ENCODE measurements at regions of chr3 and their contacts with region 1.

Region 1: DNA sequence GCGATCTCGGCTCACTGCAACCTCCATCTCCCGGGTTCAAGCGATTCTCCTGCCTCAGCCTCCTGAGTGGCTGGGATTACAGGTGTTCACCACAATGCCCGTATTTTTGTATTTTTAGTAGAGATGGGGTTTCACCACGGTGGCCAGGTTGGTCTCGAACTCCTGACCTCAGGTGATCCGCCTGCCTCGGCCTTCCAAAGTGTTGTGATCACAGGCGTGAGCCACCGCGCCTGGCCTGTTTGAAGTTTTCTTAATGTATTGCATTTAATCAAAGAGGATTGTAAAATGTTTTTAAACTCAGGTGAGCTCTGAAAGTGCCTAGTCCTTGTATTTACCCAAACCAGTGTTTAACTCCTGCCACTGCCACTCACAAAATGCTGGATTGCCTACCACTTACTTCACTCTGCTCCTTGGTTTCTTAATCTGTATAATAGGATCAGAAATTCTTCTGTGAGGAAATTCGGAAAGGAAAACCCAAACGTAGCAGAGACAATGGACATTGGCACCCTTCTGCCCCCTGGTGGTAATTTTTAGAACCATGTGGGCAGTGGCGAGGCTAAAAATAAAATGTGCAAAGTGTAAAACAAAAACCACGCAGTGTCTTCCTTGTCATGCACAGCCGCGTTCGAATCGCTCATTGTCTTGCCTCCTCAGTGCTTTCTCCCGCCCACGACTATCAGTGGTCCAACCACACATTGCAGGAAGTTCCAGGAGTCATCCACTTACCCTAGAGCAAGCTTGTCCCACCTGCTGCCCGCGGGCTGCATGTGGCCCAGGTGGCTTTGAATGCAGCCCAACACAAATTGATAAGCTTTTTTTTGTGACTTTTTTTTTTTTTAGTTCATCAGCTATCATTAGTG is 27.3 kb downstream of the CEP19 start:
- DNase-seq: peak; percentile 87
- ATAC-seq: peak; percentile 92
- H3K4me3 ChIP-seq: peak overlapping the region in 2 of 5 experiments; percentile 34 to 37
- H3K4me3 Mint-ChIP-seq: peak overlapping the region; percentile 57
- H3K27ac ChIP-seq: peak overlapping the region in 1 of 2 donors; percentile 34
- H3K27ac Mint-ChIP-seq: peak overlapping the region; percentile 28
- H3K4me1 ChIP-seq: peaks cover 21 to 26% of the 10 kb centered on the region in 2 donors
- H3K4me1 Mint-ChIP-seq: peaks cover 25% of the 10 kb centered on the region
- H3K27me3 ChIP-seq: no peaks in the 10 kb centered on the region
- H3K27me3 Mint-ChIP-seq: no peaks in the 10 kb centered on the region
- CTCF ChIP-seq: peak; percentile 87

Region 2: DNA sequence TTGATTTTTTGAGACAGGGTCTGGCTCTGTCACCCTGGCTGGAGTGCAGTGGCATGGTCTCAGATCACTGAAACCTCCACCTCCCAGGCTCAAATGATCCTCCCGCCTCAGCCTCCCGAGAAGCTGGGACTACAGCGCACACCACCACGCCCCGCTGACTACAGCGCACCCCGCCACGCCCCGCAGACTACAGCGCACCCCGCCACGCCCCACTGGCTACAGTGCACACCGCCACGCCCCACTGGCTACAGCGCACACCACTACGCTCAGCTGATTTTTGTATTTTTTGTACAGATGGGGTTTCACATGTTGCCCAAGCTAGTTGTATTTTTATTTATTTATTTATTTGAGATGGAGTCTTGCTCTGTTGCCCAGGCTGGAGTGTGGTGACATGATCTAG is 432.9 kb before region 1 on chr3:
- CTCF ChIA-PET with region 1: no interaction called
- POLR2A ChIA-PET with region 1: no interaction called
- intact Hi-C with region 1: loop called (anchors 10 kb)
- DNase-seq: peak; percentile 46
- ATAC-seq: peak; percentile 57
- H3K4me3 ChIP-seq: no peak overlapping the region
- H3K4me3 Mint-ChIP-seq: no peak overlapping the region
- H3K27ac ChIP-seq: no peak overlapping the region
- H3K27ac Mint-ChIP-seq: no peak overlapping the region
- H3K4me1 ChIP-seq: no peaks in the 10 kb centered on the region
- H3K4me1 Mint-ChIP-seq: peaks cover 8% of the 10 kb centered on the region
- H3K27me3 ChIP-seq: no peaks in the 10 kb centered on the region
- H3K27me3 Mint-ChIP-seq: no peaks in the 10 kb centered on the region
- CTCF ChIP-seq: no peak

Region 3: GRCh38 chr3:196596355-196596754 is 88.4 kb before region 1 on chr3:
- CTCF ChIA-PET with region 1: no interaction called
- POLR2A ChIA-PET with region 1: no interaction called
- intact Hi-C with region 1: no loop called
- DNase-seq: no peak
- ATAC-seq: no peak
- H3K4me3 ChIP-seq: no peak overlapping the region
- H3K4me3 Mint-ChIP-seq: no peak overlapping the region
- H3K27ac ChIP-seq: no peak overlapping the region
- H3K27ac Mint-ChIP-seq: no peak overlapping the region
- H3K4me1 ChIP-seq: peaks cover 0 to 3% of the 10 kb centered on the region in 2 donors
- H3K4me1 Mint-ChIP-seq: peaks cover 9% of the 10 kb centered on the region
- H3K27me3 ChIP-seq: peaks cover 0 to 4% (median 2%) of the 10 kb centered on the region in 4 experiments
- H3K27me3 Mint-ChIP-seq: peaks cover 16% of the 10 kb centered on the region
- CTCF ChIP-seq: no peak

Region 4: GRCh38 chr3:196617256-196617655 is 67.5 kb before region 1 on chr3:
- CTCF ChIA-PET with region 1: interaction called, 259 read pairs
- POLR2A ChIA-PET with region 1: no interaction called
- intact Hi-C with region 1: no loop called
- DNase-seq: no peak
- ATAC-seq: no peak
- H3K4me3 ChIP-seq: no peak overlapping the region
- H3K4me3 Mint-ChIP-seq: no peak overlapping the region
- H3K27ac ChIP-seq: no peak overlapping the region
- H3K27ac Mint-ChIP-seq: no peak overlapping the region
- H3K4me1 ChIP-seq: peaks cover 0 to 4% of the 10 kb centered on the region in 2 donors
- H3K4me1 Mint-ChIP-seq: peaks cover 2% of the 10 kb centered on the region
- H3K27me3 ChIP-seq: no peaks in the 10 kb centered on the region
- H3K27me3 Mint-ChIP-seq: no peaks in the 10 kb centered on the region
- CTCF ChIP-seq: no peak

Region 5: GRCh38 chr3:196632046-196632751 is 52.6 kb before region 1 on chr3:
- CTCF ChIA-PET with region 1: interaction called, 16 read pairs
- POLR2A ChIA-PET with region 1: interaction called, 3 read pairs
- intact Hi-C with region 1: loop called (anchors 2 kb)
- DNase-seq: peak; percentile 90
- ATAC-seq: peak; percentile 82
- H3K4me3 ChIP-seq: peak overlapping the region; percentile 60 to 78 (median 70)
- H3K4me3 Mint-ChIP-seq: peak overlapping the region; percentile 92
- H3K27ac ChIP-seq: peak overlapping the region; percentile 94 to 97
- H3K27ac Mint-ChIP-seq: peak overlapping the region; percentile 96
- H3K4me1 ChIP-seq: peaks cover 29 to 49% of the 10 kb centered on the region in 2 donors
- H3K4me1 Mint-ChIP-seq: peaks cover 52% of the 10 kb centered on the region
- H3K27me3 ChIP-seq: no peaks in the 10 kb centered on the region
- H3K27me3 Mint-ChIP-seq: no peaks in the 10 kb centered on the region
- CTCF ChIP-seq: peak; percentile 29

Region 6: GRCh38 chr3:196670339-196670738 is 14.4 kb before region 1 on chr3:
- CTCF ChIA-PET with region 1: interaction called, 13 read pairs
- POLR2A ChIA-PET with region 1: interaction called, 5 read pairs
- intact Hi-C with region 1: no loop called
- DNase-seq: peak; percentile 36
- ATAC-seq: peak; percentile 78
- H3K4me3 ChIP-seq: peak overlapping the region; percentile 8 to 46 (median 23)
- H3K4me3 Mint-ChIP-seq: peak overlapping the region; percentile 78
- H3K27ac ChIP-seq: peak overlapping the region; percentile 31 to 71
- H3K27ac Mint-ChIP-seq: peak overlapping the region; percentile 78
- H3K4me1 ChIP-seq: peaks cover 26 to 32% of the 10 kb centered on the region in 2 donors
- H3K4me1 Mint-ChIP-seq: peaks cover 50% of the 10 kb centered on the region
- H3K27me3 ChIP-seq: no peaks in the 10 kb centered on the region
- H3K27me3 Mint-ChIP-seq: no peaks in the 10 kb centered on the region
- CTCF ChIP-seq: no peak

Region 7: DNA sequence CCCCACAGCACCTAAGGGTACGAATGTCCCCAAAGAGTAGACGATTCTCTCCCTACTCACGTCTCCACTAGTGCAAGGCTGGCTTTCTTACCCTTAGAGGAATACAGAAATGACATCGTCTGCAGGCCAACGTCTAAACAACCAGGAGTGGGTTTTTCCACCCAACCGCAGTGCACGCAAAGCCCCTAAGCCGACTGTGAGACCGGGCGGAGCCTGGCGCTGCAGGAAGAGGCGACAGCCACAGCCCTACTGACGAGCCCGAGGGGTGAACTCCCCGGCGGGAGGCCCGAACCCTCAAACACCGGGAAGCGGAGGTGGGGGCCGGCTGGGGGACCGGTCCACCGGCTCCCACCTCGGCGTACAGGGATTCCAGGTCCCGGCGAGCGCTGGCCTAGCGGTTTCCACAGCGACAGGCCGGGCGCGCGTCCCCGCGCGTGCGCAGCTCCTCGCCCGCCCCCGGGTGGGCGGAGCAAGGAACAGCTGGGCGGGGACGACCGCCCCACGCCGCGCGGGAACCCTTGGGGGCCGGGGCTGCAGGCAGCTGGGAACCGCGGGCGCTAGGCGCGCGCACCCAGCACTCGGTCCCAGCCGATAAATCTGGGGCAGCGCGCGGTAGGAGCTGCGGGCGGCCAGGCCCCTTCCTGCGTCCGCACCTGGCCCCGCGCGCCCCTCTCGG is 27.2 kb after region 1 on chr3 and contains the starts of genes CEP19 and PIGX:
- CTCF ChIA-PET with region 1: interaction called, 3 read pairs
- POLR2A ChIA-PET with region 1: no interaction called
- intact Hi-C with region 1: loop called (anchors 2 kb)
- DNase-seq: peak; percentile 97
- ATAC-seq: peak; percentile 83
- H3K4me3 ChIP-seq: peak within 1 kb of the TSS; percentile 75 to 94 (median 87)
- H3K4me3 Mint-ChIP-seq: peak within 1 kb of the TSS; percentile 96
- H3K27ac ChIP-seq: peak within 1 kb of the TSS; percentile 91 to 96
- H3K27ac Mint-ChIP-seq: peak within 1 kb of the TSS; percentile 94
- H3K4me1 ChIP-seq: peaks cover 13 to 16% of the 10 kb centered on the region in 2 donors
- H3K4me1 Mint-ChIP-seq: peaks cover 14% of the 10 kb centered on the region
- H3K27me3 ChIP-seq: no peaks in the 10 kb centered on the region
- H3K27me3 Mint-ChIP-seq: no peaks in the 10 kb centered on the region
- CTCF ChIP-seq: no peak
- total RNA-seq, gene CEP19: 4.6 and 5.0 TPM in 2 replicates
- total RNA-seq, gene PIGX: 18.9 and 21.5 TPM in 2 replicates